ENCODE measurements at regions of chr7 and their contacts with region 1.

Region 1: DNA sequence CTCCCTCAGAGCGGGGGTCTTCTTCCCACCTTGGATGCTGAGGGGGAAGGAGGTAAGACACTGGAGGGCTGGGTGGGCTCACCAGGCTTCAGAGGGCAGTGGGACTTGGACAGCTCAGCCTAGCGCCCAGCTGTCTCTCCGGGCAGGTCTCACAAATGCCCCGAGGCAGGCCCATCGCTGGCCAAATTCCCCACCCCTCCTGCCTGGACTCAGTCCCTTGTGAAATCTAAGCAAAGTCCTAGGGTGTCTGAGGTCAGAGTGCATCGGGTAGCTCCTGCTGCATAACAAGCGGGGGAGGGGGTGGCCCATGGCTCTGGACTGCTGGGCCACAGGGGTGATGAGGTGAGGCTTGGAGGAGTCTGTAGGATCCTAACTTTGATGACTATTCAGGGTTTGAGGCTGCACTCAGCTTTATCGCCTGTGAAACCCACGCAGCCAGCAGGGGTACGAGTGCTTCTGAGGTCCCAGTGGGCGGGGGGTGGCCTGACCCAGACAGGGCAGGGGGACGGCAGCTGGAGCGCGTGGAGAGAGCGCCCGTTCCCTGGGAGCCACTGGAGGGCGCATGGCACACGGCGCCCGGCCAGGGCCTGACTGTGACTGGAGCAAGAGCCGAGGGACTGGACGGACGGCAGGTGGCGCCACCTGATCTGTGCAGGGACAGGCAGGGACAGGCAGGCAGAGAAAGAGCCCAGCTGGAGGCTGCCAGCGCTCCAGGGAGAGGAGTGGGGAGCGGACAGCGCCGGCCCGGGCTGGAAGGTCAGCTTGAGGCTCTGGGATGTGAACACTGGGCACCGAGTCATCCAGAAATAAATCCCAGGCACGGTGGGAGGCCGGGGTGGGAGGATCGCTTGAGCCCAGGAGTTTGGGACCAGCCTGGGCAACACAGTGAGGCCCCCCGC is 10.0 kb downstream of the CYP2W1 start:
- DNase-seq: peak; percentile 96
- ATAC-seq: peak; percentile 99
- H3K4me3 Mint-ChIP-seq: no peak overlapping the region
- H3K27ac Mint-ChIP-seq: no peak overlapping the region
- H3K4me1 Mint-ChIP-seq: peaks cover 6% of the 10 kb centered on the region
- H3K27me3 Mint-ChIP-seq: no peaks in the 10 kb centered on the region

Region 2: GRCh38 chr7:945556-946255 is 47.3 kb before region 1 on chr7:
- CTCF ChIA-PET with region 1: no interaction called
- DNase-seq: no peak
- ATAC-seq: no peak
- H3K4me3 Mint-ChIP-seq: no peak overlapping the region
- H3K27ac Mint-ChIP-seq: no peak overlapping the region
- H3K4me1 Mint-ChIP-seq: peaks cover 9% of the 10 kb centered on the region
- H3K27me3 Mint-ChIP-seq: peaks cover 12% of the 10 kb centered on the region

Region 3: GRCh38 chr7:974820-975681 is 17.9 kb before region 1 on chr7 and contains the start of gene COX19:
- CTCF ChIA-PET with region 1: interaction called, 37 read pairs
- DNase-seq: peak; percentile 92
- ATAC-seq: peak; percentile 94
- H3K4me3 Mint-ChIP-seq: peak within 1 kb of the TSS; percentile 79
- H3K27ac Mint-ChIP-seq: peak within 1 kb of the TSS; percentile 70
- H3K4me1 Mint-ChIP-seq: peaks cover 21% of the 10 kb centered on the region
- H3K27me3 Mint-ChIP-seq: no peaks in the 10 kb centered on the region
- total RNA-seq, gene COX19: 18.7 to 18.9 TPM

Region 4: DNA sequence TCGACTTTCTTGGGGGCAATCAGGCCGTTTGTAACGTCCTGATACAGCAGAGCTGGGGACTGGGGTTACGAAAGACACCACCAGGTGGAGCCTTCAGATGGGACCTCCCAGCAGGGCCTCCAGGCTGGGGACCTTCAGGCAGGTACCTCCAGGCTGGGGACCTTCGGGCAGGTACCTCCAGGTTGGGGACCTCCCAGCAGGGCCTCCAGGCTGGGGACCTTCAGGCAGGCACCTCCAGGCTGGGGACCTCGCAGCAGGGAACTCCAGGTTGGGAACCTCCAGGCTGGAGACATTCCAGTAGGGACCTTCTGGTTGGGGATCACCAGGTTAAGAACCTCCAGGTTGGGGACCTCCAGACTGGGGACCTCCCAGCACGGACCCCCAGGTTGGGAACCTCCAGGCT is 27.9 kb after region 1 on chr7:
- CTCF ChIA-PET with region 1: interaction called, 15 read pairs
- DNase-seq: no peak
- ATAC-seq: no peak
- H3K4me3 Mint-ChIP-seq: no peak overlapping the region
- H3K27ac Mint-ChIP-seq: no peak overlapping the region
- H3K4me1 Mint-ChIP-seq: peaks cover 4% of the 10 kb centered on the region
- H3K27me3 Mint-ChIP-seq: no peaks in the 10 kb centered on the region

Region 5: GRCh38 chr7:1053002-1053478 is 60.1 kb after region 1 on chr7:
- CTCF ChIA-PET with region 1: interaction called, 58 read pairs
- DNase-seq: no peak
- ATAC-seq: no peak
- H3K4me3 Mint-ChIP-seq: no peak overlapping the region
- H3K27ac Mint-ChIP-seq: no peak overlapping the region
- H3K4me1 Mint-ChIP-seq: peaks cover 18% of the 10 kb centered on the region
- H3K27me3 Mint-ChIP-seq: no peaks in the 10 kb centered on the region

Region 6: DNA sequence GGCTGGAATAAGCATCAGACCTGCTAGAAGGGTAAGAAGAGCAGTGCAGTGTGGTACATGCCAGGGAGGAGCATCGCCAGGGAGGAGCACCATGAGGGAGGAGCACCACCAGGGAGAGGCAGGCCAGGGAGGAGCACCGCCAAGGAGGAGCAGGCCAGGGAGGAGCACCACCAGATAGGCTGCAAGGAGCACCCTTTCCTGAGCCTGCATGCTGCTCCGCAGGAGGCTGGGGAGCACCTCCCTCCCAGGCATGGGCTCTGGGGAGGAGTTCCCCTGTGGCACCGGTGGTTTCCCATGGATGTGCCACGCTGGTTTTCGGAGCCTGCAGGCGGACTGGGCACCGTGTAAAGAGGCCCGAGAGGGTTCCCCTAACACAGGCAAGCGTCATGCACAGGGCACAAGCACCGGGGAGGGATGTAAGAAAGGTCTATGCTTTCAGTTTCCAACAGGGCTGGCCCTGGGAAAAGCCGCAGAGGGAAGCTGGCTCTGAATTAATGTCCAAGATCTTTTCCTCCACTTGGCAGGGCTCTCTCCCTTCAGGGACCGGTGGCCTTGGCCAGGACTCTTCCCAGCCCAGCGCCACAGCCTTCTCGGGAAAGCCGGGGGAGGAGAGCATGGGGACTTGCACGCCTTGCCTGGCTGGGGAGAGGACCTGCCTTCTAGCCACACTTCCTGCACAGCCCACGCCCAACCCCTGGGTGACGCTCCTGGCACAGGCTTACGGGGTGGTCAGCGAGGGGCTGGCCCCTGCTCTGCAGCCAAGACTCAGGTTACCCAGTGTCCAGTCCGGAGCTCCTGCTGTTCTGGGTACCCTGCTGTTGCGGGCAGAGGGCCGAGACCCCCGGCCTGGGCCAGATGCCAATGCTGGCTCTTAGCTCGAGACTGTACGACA is 83.5 kb after region 1 on chr7:
- CTCF ChIA-PET with region 1: interaction called, 11 read pairs
- DNase-seq: no peak
- ATAC-seq: no peak
- H3K4me3 Mint-ChIP-seq: no peak overlapping the region
- H3K27ac Mint-ChIP-seq: no peak overlapping the region
- H3K4me1 Mint-ChIP-seq: no peaks in the 10 kb centered on the region
- H3K27me3 Mint-ChIP-seq: no peaks in the 10 kb centered on the region

Region 7: GRCh38 chr7:1137510-1138167 is 144.7 kb after region 1 on chr7:
- CTCF ChIA-PET with region 1: interaction called, 30 read pairs
- DNase-seq: no peak
- ATAC-seq: peak; percentile 83
- H3K4me3 Mint-ChIP-seq: peak overlapping the region; percentile 79
- H3K27ac Mint-ChIP-seq: peak overlapping the region; percentile 81
- H3K4me1 Mint-ChIP-seq: peaks cover 16% of the 10 kb centered on the region
- H3K27me3 Mint-ChIP-seq: no peaks in the 10 kb centered on the region

Region 8: DNA sequence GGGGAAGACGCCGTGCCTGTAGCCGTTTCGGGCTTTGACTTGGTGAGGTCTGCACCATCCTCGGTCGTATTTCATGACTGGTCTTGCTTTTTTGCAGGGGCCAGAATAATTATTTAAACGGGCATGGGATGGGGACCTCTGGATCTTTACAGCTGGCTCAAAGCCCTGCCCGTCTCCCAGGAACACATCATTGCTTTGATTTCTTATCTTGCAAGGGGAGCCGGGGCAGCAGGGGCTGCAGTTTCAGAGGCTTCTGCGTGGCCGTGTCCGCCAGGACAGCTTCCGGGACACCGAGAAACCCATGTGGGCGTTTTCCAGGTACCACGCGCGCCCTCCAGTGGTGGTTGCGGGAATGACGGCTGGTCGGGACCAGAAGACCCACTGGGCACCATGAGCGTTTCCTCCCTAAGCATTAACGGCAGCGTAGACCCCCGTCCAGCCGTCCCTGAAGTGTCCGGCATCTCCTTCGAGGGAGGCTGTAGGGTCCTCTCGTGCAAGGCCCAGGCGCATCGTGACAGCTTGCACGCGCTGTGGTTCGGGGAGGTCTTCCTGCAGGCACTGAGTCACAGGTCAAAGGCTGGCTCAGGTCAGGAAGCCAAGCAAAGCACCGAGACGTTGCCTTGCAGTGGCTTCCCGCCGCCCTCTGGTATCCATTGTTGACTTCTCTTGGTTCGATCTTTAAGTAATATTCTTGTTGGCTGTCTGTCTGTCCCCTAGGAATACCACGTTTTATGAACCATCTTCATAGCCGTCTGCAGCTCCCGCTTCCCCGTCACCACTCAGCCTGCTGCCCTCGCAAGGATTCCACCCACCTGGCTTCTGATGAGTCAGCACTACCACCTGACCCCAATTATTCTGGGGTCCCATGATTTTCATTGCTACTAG is 183.3 kb after region 1 on chr7:
- CTCF ChIA-PET with region 1: interaction called, 69 read pairs
- DNase-seq: peak; percentile 90
- ATAC-seq: peak; percentile 84
- H3K4me3 Mint-ChIP-seq: peak overlapping the region; percentile 51
- H3K27ac Mint-ChIP-seq: peak overlapping the region; percentile 87
- H3K4me1 Mint-ChIP-seq: peaks cover 14% of the 10 kb centered on the region
- H3K27me3 Mint-ChIP-seq: peaks cover 15% of the 10 kb centered on the region

Measured in activated CD8-positive, alpha-beta memory T cell treated with anti-CD3 and anti-CD28 coated beads, Interleukin-2, amount 10 ng/mL, durations not matched to agents 7 days and 5 days (primary cell).